Prostate gland (tissue), 2 donors: ENCODE measurements at regions of chr11 and their contacts with region 1.

Region 1: DNA sequence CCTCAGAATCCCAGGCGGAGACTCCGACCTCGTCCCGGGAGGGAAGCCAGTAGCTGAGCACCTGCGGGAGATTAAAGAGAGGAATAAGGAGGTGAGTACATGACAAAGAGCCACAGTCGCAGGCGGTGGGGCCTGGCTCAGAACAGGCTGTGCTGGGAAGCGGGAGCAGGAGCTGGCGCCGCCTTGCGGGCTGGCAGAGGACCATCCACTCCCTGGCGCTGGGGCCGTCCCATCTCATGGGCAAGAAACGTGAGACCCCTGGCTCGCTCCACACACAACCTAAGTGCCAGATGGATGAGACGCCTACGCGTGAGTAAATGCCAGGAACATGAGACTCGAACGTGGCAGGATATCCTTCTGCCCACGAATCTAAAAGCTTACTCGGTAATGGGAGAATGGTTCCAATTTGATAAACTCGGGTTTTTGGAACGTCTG is 6.3 kb downstream of the CEND1 start:
- DNase-seq: peak; percentile 85
- H3K4me3 ChIP-seq: no peak overlapping the region
- H3K27ac ChIP-seq: peak overlapping the region; percentile 19 to 45
- H3K4me1 ChIP-seq: no peaks in the 10 kb centered on the region
- H3K27me3 ChIP-seq: no peaks in the 10 kb centered on the region
- CTCF ChIP-seq: peak; percentile 9 to 82 (median 67)
- POLR2A ChIP-seq: no peak

Region 2: DNA sequence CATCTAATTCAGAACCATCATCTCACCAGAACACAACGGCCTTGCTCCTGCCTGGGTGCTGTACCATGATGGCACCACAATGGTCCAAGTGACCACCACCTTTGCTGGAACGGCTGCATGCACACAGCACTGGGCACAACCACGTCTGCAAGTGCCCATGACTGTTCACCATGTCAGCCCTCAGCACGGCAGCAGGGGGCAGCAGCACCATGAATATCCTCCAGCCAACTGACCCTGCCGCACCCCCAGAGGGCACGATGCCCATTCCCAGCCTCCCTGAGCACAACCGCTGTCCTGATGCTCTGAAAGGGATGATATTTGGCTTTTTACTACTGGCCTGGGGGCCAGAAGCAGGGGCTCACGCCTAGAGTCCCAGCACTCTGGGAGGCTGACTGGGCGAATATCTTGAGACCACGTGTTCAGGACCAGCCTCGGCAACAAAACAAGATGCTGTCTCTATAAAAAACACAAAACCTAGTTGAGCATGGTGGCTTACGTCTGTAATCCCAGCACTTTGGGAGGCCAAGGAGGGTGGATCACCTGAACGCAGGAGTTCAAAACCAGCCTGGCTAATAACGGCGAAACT is 120.8 kb before region 1 on chr11:
- intact Hi-C with region 1: loop called (anchors 10 kb)
- DNase-seq: no peak
- H3K4me3 ChIP-seq: no peak overlapping the region
- H3K27ac ChIP-seq: no peak overlapping the region
- H3K4me1 ChIP-seq: no peaks in the 10 kb centered on the region
- H3K27me3 ChIP-seq: no peaks in the 10 kb centered on the region
- CTCF ChIP-seq: peak; percentile 33 to 82 (median 74)
- POLR2A ChIP-seq: no peak